Naive thymus-derived CD8-positive, alpha-beta T cell (primary cell): ENCODE measurements at regions of chr1 and their contacts with region 1.

Region 1: DNA sequence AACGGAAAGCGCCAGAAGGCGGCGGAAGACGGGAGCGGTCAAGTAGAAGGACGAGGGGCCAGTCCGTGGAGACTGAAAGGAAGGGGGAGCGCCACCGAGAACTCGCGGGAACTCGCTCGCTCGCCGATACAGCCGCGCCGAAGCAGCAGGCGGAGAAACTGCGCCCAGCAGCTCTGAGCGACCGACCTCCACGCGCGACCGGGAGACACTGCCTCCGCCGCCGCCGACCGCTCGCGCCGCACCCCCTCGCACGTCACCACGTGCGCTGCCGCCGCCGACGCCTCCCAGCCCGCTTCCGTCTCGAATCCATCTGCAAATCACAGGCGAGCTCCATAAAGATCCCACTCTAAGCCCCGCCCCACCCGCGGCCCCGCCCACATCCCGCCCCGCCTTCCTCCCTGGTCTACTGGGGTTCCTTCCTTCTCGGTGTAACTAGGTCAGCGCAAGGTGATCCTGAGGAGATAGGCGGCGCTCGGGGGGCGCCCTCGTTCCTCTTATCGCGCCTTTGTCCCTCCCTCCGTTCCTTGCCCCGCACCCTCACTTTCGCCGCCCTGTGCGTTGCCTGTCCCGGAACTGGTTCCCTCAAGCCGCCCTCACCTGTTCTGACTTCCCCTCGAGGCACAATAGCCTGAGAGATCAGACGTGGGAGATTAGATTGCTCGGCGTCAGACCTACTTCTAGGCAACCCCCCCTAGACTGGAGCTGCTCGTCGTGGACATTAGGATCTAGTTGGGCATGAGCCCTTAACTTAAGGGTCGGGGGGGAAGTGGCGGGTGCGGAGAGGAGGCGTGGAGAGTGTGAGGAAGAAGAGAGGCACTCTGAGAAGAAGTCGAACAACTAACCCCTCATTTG is at the start of gene IVNS1ABP:
- DNase-seq: peak; percentile 89 to 97 (median 96)
- ATAC-seq: peak; percentile 76 to 78
- H3K4me3 Mint-ChIP-seq: peak within 1 kb of the TSS; percentile 91 to 99 (median 96)
- H3K27ac Mint-ChIP-seq: peak within 1 kb of the TSS; percentile 97 to 100 (median 99)
- H3K4me1 Mint-ChIP-seq: peaks cover 18 to 55% (median 52%) of the 10 kb centered on the region in 4 donors
- H3K27me3 Mint-ChIP-seq: no peaks in the 10 kb centered on the region
- polyA plus RNA-seq, gene IVNS1ABP: 44.8 to 55.1 (median 48.5) TPM

Region 2: GRCh38 chr1:185156854-185157598 is 160.2 kb before region 1 on chr1 and contains the starts of genes SWT1 and TRMT1L:
- POLR2A ChIA-PET with region 1: interaction called, 39 read pairs
- DNase-seq: peak; percentile 90 to 99 (median 97)
- ATAC-seq: peak; percentile 88 to 91
- H3K4me3 Mint-ChIP-seq: peak within 1 kb of the TSS; percentile 90 to 99 (median 98)
- H3K27ac Mint-ChIP-seq: peak within 1 kb of the TSS; percentile 94 to 99 (median 98)
- H3K4me1 Mint-ChIP-seq: peaks cover 23 to 53% (median 43%) of the 10 kb centered on the region in 4 donors
- H3K27me3 Mint-ChIP-seq: no peaks in the 10 kb centered on the region
- polyA plus RNA-seq, gene SWT1: 3.3 to 6.5 (median 4.2) TPM
- polyA plus RNA-seq, gene TRMT1L: 10.8 to 17.4 (median 14.1) TPM

Region 3: DNA sequence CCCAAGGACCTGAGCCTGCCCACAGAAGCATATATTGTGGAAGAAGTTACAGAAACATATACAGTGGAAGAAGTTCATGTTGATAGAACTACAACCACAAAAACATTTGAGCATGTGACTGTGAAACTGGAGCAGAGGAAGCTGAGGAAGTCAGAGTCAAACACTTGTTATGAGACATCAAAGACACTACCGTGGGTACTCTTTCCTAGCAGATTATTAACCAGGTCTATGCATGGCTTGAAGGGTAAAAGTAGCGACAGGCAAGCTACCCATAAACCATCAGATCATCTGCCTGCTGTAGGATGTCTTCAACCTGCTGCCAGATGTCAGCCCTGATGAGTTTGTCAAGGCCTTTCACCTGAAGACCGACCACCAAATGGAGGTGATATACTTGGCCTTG is 36.0 kb before region 1 on chr1:
- POLR2A ChIA-PET with region 1: interaction called, 58 read pairs
- DNase-seq: peak in 6 of 10 donors; percentile 3 to 74 (median 40)
- ATAC-seq: peak; percentile 89 to 96
- H3K4me3 Mint-ChIP-seq: peak overlapping the region; percentile 57 to 88 (median 74)
- H3K27ac Mint-ChIP-seq: peak overlapping the region; percentile 92 to 100 (median 97)
- H3K4me1 Mint-ChIP-seq: peaks cover 26 to 69% (median 54%) of the 10 kb centered on the region in 4 donors
- H3K27me3 Mint-ChIP-seq: no peaks in the 10 kb centered on the region

Region 4: DNA sequence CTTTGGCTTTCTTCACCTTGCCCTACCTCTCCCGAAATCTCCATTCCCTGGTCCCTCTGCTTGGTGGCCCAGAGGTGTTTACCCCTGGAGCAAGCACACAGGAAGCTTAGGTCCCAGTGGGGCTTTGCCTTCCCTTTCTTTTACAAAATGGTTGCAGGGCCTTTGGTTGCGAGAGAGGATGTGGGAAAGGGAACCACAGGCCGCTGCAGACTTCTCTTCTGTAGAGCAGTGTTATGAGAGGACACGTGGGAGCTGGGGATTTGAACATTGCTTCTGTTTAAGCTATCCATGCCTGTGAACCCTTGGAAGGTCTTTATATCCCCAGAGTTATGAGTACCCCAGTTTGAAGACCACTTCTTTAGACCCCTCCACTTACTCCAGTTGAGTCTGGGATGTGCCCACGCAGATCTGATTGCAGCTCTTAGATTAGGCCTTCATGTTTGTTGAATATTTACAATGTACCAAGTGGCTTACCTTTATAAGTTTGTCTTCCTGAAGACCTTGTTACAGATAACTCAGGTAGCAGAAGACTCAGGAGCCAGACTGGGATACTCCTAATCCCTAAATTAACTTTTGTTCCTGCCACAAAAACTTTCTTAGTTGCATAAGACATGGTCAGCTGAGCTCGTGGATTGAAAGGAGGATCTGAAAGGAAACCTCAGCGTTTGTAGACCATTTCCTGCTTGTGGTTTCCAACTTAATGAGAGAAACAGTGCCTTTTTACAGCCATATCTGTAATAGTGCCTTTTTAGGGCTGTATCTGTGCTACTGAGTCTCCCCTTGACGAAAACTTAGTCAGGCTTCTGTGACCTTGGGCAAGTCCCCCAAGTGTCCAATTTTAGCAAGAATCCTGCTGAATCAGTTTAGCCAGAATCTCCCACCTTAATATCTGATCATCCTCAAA is 21.7 kb after region 1 on chr1:
- POLR2A ChIA-PET with region 1: interaction called, 23 read pairs
- DNase-seq: peak in 7 of 10 donors; percentile 20 to 68 (median 50)
- ATAC-seq: peak; percentile 88 to 94
- H3K4me3 Mint-ChIP-seq: peak overlapping the region; percentile 10 to 77 (median 66)
- H3K27ac Mint-ChIP-seq: peak overlapping the region; percentile 73 to 90 (median 82)
- H3K4me1 Mint-ChIP-seq: peaks cover 18 to 44% (median 34%) of the 10 kb centered on the region in 4 donors
- H3K27me3 Mint-ChIP-seq: no peaks in the 10 kb centered on the region

Region 5: GRCh38 chr1:185566995-185567394 is 249.7 kb after region 1 on chr1:
- POLR2A ChIA-PET with region 1: interaction called, 57 read pairs
- DNase-seq: peak in 9 of 10 donors; percentile 46 to 94 (median 83)
- ATAC-seq: peak; percentile 84 to 88
- H3K4me3 Mint-ChIP-seq: peak overlapping the region; percentile 49 to 81 (median 73)
- H3K27ac Mint-ChIP-seq: peak overlapping the region; percentile 95 to 99 (median 98)
- H3K4me1 Mint-ChIP-seq: peaks cover 30 to 84% (median 82%) of the 10 kb centered on the region in 4 donors
- H3K27me3 Mint-ChIP-seq: no peaks in the 10 kb centered on the region

Region 6: GRCh38 chr1:185581961-185582725 is 264.9 kb after region 1 on chr1:
- POLR2A ChIA-PET with region 1: no interaction called
- DNase-seq: no peak
- ATAC-seq: no peak
- H3K4me3 Mint-ChIP-seq: no peak overlapping the region
- H3K27ac Mint-ChIP-seq: peak overlapping the region in 1 of 10 donors; percentile 10
- H3K4me1 Mint-ChIP-seq: no peaks in the 10 kb centered on the region
- H3K27me3 Mint-ChIP-seq: peaks cover 0 to 4% (median 0%) of the 10 kb centered on the region in 5 donors

Region 7: GRCh38 chr1:185648858-185649524 is 331.7 kb after region 1 on chr1:
- POLR2A ChIA-PET with region 1: interaction called, 12 read pairs
- DNase-seq: peak in 1 of 10 donors; percentile 53
- ATAC-seq: no peak
- H3K4me3 Mint-ChIP-seq: no peak overlapping the region
- H3K27ac Mint-ChIP-seq: peak overlapping the region in 7 of 10 donors; percentile 0 to 91 (median 57)
- H3K4me1 Mint-ChIP-seq: peaks cover 26 to 42% (median 36%) of the 10 kb centered on the region in 4 donors
- H3K27me3 Mint-ChIP-seq: no peaks in the 10 kb centered on the region

Region 8: GRCh38 chr1:185681034-185681633 is 363.9 kb after region 1 on chr1:
- POLR2A ChIA-PET with region 1: interaction called, 21 read pairs
- DNase-seq: peak in 6 of 10 donors; percentile 14 to 64 (median 30)
- ATAC-seq: peak; percentile 58 to 73
- H3K4me3 Mint-ChIP-seq: no peak overlapping the region
- H3K27ac Mint-ChIP-seq: peak overlapping the region in 1 of 10 donors; percentile 47
- H3K4me1 Mint-ChIP-seq: peaks cover 12 to 30% (median 26%) of the 10 kb centered on the region in 4 donors
- H3K27me3 Mint-ChIP-seq: peaks cover 0 to 2% (median 0%) of the 10 kb centered on the region in 5 donors